ENCODE measurements at regions of chr11 and their contacts with region 1.

Region 1: DNA sequence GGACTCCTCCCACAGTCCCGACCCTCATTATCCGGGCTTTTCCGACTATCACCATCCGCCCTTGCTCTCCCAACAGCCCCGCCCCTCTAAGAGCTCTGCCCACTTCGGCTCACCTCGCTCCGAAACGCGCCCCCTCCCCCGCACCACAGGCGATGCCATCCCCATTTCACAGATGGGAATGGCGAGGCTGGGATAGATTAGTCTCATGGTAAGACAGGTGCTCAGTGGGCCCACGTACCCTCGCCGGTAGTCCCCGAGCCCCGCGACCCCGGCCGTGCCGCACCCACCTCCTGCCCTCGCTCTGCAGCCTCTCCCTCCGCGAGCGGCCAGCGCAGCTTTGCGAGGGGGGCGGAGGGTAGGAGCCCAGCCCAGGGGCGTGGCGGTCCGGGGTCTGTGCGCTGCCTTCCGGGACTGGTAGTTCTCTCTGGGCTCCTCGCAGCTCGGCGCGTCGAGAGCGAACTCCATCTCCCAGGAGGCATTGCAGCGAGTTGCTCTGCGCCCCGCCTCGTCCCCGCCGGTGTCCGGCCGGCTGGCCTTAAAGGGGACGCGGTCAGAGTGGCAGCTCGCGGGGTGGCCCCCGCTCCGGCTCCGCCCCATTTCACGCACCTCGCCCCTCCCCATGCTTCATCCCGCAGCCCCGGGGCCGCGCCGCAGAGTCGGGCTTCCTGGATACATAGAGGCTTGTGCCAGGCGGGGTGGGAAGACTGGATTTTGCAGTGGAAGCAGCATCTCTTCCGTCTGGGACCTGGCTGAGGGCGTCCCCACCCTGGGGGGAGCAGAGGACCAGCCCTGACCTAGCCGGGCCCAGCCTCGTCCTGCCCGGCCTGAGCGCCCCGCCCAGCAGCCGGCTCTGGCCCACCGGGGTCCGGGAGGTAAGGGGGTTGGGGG is at the starts of genes KCTD21 and USP35:
- DNase-seq: peak in 1 of 2 donors; percentile 97
- H3K4me3 ChIP-seq: peak within 1 kb of the TSS; percentile 70 to 93
- H3K27ac ChIP-seq: peak within 1 kb of the TSS; percentile 89
- H3K4me1 ChIP-seq: peaks cover 65% of the 10 kb centered on the region
- H3K27me3 ChIP-seq: no peaks in the 10 kb centered on the region
- CTCF ChIP-seq: no peak
- POLR2A ChIP-seq: peak in 1 of 2 donors; percentile 79
- total RNA-seq, gene KCTD21: 8.6 TPM
- total RNA-seq, gene USP35: 11.8 TPM

Region 2: GRCh38 chr11:78061088-78061921 is 127.2 kb before region 1 on chr11:
- intact Hi-C with region 1: loop called (anchors 10 kb)
- DNase-seq: no peak
- H3K4me3 ChIP-seq: no peak overlapping the region
- H3K27ac ChIP-seq: no peak overlapping the region
- H3K4me1 ChIP-seq: peaks cover 15% of the 10 kb centered on the region
- H3K27me3 ChIP-seq: no peaks in the 10 kb centered on the region
- CTCF ChIP-seq: no peak
- POLR2A ChIP-seq: no peak

Region 3: GRCh38 chr11:78168539-78169477 is 19.7 kb before region 1 on chr11:
- intact Hi-C with region 1: no loop called
- DNase-seq: no peak
- H3K4me3 ChIP-seq: no peak overlapping the region
- H3K27ac ChIP-seq: peak overlapping the region; percentile 87
- H3K4me1 ChIP-seq: peaks cover 21% of the 10 kb centered on the region
- H3K27me3 ChIP-seq: no peaks in the 10 kb centered on the region
- CTCF ChIP-seq: no peak
- POLR2A ChIP-seq: no peak

Measured in vagina (tissue), 2 donors.